ENCODE measurements at regions of chr12 and their contacts with region 1.

Region 1: DNA sequence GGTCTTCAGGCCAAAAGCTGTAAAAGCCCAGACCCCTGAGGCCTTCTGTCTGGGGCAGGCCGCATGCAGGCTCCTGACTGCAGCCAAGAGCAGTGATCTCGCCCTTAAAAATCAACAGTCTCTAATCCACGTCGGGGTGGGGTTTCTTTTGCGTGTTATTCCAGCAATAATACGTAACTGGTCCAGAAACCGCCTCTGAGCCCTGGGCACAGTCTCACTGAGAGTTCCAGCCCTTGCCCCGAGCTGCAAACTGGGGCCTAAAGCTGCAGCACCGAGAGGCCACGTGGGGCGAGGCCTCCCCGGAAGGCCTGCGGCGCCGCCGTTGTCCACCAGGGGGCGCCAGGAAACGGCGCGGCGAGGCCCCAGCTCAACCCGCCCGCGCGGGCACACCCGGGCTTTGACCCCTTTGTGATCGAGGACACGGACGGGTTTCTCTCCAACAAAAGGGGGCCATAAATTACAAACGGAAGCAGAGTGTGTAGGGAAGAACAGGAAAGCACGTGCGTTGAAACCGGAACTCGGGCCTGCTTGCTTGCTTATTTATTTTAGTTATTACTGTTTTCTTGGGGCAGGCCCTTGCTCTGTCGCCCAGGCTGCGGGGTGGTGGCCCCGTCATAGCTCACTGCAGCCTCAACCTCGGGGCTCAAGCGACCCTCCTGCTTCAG is 87.2 kb downstream of the NINJ2 start:
- DNase-seq: peak; percentile 97
- H3K4me3 Mint-ChIP-seq: peak overlapping the region; percentile 55
- H3K27ac Mint-ChIP-seq: peak overlapping the region; percentile 86
- H3K4me1 Mint-ChIP-seq: peaks cover 32% of the 10 kb centered on the region
- H3K27me3 Mint-ChIP-seq: no peaks in the 10 kb centered on the region

Region 2: DNA sequence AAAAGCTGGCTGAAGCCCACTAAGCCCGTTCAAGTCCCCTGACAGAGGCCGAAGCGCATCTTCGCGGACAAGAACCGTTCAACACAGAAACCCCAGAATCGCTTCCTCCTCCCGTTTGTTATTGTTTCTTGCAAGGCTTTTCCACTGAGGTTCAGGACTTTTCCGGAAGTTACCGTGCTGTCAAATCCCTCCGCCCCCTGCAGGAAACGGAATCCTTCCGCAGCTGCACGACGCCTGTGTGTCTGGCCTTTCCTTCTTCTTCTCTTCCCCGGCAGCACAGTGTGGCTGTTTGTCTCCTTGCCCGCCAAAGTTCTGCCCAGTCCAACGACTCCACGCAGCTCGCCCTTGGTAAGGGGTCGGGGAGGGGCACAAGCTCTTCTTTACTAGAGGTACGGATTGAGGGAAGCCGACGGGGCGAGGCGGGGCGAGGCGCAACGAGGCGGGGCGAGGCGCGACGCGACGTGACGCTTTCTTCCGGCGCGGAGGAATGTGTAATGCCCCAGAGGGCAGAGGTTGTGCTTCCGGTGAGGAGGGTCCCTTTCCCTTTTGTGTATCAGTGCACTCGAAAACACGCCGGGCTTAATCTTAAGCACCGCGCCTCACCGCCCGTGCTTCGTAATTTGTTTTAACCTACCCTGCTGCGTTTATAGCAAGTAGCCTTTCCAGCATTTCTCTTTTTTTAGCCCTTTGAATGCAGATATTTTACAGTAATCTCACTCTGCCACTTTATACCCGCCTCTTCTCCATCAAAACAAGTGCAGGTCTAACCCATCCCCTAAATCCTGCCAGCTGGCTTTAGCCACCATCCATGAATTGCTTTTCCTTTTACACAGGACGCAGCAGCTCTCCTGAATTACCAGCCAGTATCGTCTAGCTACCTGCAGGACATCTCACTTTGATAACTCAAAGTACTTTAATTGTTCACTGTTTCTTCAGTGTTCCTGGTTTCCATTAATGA is 186.7 kb before region 1 on chr12 and contains the start of gene KDM5A:
- intact Hi-C with region 1: no loop called
- DNase-seq: peak; percentile 96
- H3K4me3 Mint-ChIP-seq: peak within 1 kb of the TSS; percentile 94
- H3K27ac Mint-ChIP-seq: peak within 1 kb of the TSS; percentile 98
- H3K4me1 Mint-ChIP-seq: peaks cover 24% of the 10 kb centered on the region
- H3K27me3 Mint-ChIP-seq: no peaks in the 10 kb centered on the region
- total RNA-seq, gene KDM5A: 79.0 and 82.7 TPM in 2 replicates

Region 3: DNA sequence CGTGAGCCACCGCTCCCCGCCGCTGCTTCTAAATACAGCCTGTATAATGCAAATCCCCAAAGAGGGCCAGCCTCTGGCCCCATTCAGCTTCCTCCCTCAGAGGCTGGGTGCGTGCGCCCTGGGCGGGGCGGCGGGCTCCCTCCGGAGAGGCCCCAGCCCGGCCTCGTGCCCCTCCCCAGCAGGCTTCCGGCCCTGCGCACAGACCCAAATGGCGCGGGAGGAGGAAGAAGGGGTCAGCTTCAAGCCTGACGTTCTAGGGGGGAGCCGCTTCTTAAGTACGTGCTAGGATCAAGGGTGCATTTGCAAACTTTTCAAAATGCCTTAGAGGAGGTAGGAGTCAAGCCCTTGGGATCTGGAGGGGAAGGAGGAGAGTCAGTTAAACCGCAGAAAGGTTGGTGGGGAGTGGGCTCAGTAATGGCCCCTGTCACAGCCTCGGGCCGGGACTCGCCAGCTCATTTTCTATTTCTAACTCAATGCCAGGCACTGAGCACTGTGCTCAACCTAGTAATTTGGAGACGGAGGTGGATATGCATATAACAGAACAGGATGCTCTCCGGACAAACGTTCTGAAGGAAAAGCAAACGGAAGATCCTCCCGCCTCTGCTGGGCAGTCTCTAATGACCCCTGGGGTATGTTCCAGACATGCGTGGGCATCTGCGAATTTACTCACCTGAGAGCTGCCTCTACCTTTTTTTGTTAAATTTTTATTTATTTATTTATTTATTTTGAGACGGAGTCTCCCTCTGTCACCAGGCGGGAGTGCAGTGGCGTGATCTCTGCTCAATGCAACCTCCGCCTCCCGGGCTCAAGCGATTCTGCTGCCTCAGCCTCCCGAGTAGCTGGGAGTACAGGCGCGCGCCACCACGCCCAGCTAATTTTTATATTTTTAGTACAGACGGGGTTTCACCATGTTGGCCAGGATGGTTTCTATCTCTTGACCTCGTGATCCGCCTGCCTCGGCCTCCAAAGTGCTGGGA is 54.9 kb after region 1 on chr12:
- intact Hi-C with region 1: loop called (anchors 2 kb)
- DNase-seq: peak; percentile 96
- H3K4me3 Mint-ChIP-seq: peak overlapping the region; percentile 93
- H3K27ac Mint-ChIP-seq: peak overlapping the region; percentile 99
- H3K4me1 Mint-ChIP-seq: peaks cover 42% of the 10 kb centered on the region
- H3K27me3 Mint-ChIP-seq: no peaks in the 10 kb centered on the region

Region 4: GRCh38 chr12:642633-643474 is 66.8 kb after region 1 on chr12:
- intact Hi-C with region 1: loop called (anchors 1 kb)
- DNase-seq: peak; percentile 94
- H3K4me3 Mint-ChIP-seq: peak overlapping the region; percentile 86
- H3K27ac Mint-ChIP-seq: peak overlapping the region; percentile 92
- H3K4me1 Mint-ChIP-seq: peaks cover 57% of the 10 kb centered on the region
- H3K27me3 Mint-ChIP-seq: no peaks in the 10 kb centered on the region

Region 5: DNA sequence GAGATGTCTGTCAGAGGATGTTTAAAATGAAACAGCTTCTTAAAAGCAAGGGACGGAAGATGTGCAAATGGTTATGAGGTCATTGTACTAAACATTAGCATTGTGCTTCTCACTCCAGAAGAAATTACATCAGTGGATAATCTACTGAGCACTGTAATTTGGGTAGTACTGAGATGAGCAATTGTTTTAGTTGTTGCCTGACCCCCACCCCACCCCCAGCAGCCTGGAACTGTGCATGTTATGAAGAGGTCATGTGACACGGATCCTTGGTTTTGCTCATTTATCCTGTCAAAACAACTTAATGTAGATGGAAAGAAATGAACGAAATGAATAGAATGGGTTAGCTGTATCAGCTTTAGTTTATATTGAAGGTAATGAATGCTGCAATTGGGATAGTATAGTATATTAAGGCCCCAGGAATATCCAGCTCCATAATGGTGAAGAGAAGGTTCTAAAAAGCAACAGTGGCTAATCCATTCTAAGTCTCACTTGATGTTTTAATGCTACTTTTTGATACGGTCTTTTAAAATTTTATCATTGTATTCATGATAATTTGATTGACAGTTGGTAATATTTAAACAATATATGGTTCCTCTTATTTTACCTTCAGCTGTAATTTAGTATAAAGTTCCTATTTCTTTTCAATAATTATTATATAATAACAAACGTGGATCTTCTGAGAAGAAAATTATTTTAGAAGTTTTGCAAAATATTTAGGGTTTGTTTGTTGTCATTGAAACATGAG is 234.8 kb after region 1 on chr12:
- intact Hi-C with region 1: loop called (anchors 2 kb)
- DNase-seq: peak; percentile 74
- H3K4me3 Mint-ChIP-seq: no peak overlapping the region
- H3K27ac Mint-ChIP-seq: peak overlapping the region; percentile 57
- H3K4me1 Mint-ChIP-seq: peaks cover 41% of the 10 kb centered on the region
- H3K27me3 Mint-ChIP-seq: no peaks in the 10 kb centered on the region

Region 6: DNA sequence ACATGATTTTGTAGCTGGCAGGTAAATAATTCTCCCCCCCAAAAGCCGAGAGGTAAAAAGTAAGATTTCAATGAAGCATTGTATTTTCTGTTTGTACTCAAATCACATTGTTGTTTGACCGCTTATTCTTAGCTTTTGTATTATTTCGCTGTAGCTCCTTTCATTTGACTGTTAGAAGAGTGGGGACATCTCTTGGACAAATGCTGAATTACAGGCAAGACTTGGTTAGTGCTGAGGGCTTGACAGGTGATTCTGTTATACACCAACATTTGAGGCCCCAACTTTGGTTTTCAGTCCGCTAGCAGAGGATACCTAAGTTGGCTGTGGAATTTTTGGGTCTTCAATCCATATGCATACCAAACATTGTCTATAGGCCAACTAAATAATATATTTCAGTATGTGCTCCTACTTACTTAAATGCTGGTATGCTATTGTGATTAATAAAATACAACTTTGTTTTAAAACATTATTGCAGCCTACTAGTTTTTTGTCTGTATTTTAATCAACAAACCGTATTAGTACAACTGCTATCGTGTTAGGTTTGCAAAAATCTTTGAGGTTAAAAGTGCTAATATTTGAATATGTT is 517.2 kb after region 1 on chr12:
- intact Hi-C with region 1: loop called (anchors 10 kb)
- DNase-seq: peak; percentile 83
- H3K4me3 Mint-ChIP-seq: no peak overlapping the region
- H3K27ac Mint-ChIP-seq: no peak overlapping the region
- H3K4me1 Mint-ChIP-seq: peaks cover 12% of the 10 kb centered on the region
- H3K27me3 Mint-ChIP-seq: no peaks in the 10 kb centered on the region

Measured in activated CD4-positive, alpha-beta T cell treated with anti-CD3 and anti-CD28 coated beads, Interleukin-2, amount 10 ng/mL, durations not matched to agents 24 days and 14 days (primary cell).